ENCODE measurements at regions of chr1 and their contacts with region 1.

Region 1: GRCh38 chr1:145845514-145846161 is at the start of gene NUDT17:
- DNase-seq: peak; percentile 55 to 88 (median 82)
- ATAC-seq: peak; percentile 79
- H3K4me3 ChIP-seq: peak within 1 kb of the TSS; percentile 58 to 74
- H3K4me3 Mint-ChIP-seq: no peak within 1 kb of the TSS
- H3K27ac ChIP-seq: peak within 1 kb of the TSS; percentile 14 to 21
- H3K27ac Mint-ChIP-seq: peak within 1 kb of the TSS; percentile 47
- H3K4me1 ChIP-seq: peaks cover 12% of the 10 kb centered on the region
- H3K4me1 Mint-ChIP-seq: peaks cover 8% of the 10 kb centered on the region
- H3K27me3 ChIP-seq: no peaks in the 10 kb centered on the region
- H3K27me3 Mint-ChIP-seq: no peaks in the 10 kb centered on the region
- CTCF ChIP-seq: peak; percentile 91
- total RNA-seq, gene NUDT17: 1.4 TPM

Region 2: GRCh38 chr1:145804235-145805045 is 41.2 kb before region 1 on chr1:
- CTCF ChIA-PET with region 1: no interaction called
- POLR2A ChIA-PET with region 1: no interaction called
- intact Hi-C with region 1: no loop called
- DNase-seq: no peak
- ATAC-seq: no peak
- H3K4me3 ChIP-seq: no peak overlapping the region
- H3K4me3 Mint-ChIP-seq: no peak overlapping the region
- H3K27ac ChIP-seq: no peak overlapping the region
- H3K27ac Mint-ChIP-seq: no peak overlapping the region
- H3K4me1 ChIP-seq: no peaks in the 10 kb centered on the region
- H3K4me1 Mint-ChIP-seq: peaks cover 52% of the 10 kb centered on the region
- H3K27me3 ChIP-seq: no peaks in the 10 kb centered on the region
- H3K27me3 Mint-ChIP-seq: no peaks in the 10 kb centered on the region
- CTCF ChIP-seq: no peak

Region 3: DNA sequence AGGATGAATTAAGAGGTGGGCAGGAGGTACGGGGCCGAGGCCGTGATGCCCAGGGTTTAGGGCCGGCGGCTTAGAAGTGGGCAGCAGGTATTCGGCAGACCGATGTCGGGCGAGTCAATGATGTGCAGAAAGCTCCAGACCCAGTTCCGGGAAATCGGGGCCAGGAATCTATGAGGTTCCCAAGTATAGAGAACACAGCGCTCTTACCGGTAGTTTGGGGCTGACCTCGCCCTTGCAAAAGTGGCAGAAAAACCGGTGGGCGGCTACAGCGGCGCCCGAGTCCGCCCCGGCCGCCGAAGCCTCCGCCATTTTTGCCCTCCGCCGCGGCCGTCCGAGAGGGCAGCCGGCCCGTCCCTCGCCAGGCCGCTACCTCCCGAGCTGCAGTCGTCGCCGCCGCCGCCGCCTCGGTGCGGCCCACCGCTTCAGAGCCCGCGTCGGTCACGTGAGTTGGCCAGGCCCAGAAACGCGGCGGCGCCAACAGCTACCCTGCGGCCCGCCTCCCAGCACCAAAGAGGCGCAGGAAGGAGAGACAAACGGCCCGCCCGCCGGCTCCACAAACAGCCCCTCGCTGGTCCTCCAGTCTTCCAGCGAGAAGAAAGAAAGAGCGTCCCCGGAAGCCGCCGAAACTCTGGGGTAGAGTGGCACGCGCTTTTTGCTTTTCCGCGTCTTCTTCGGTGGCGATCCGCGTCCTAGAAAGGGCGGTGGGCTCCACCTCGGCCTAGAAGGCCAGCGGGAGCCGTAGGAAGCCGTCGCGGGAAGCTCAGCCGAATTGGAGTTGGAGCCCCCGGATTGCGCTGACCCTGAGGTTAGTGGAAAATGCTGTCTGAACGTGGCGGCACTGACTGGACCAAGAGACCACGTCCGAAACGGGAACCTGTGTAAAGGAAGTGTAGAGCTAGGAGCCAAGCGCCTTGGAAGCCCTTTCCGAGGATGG is 21.8 kb before region 1 on chr1 and contains the starts of genes POLR3C and RNF115:
- CTCF ChIA-PET with region 1: interaction called, 20 read pairs
- POLR2A ChIA-PET with region 1: interaction called, 25 read pairs
- intact Hi-C with region 1: loop called (anchors 2 kb)
- DNase-seq: peak; percentile 68 to 94 (median 88)
- ATAC-seq: peak; percentile 93
- H3K4me3 ChIP-seq: peak within 1 kb of the TSS; percentile 93 to 99
- H3K4me3 Mint-ChIP-seq: peak within 1 kb of the TSS; percentile 95
- H3K27ac ChIP-seq: peak within 1 kb of the TSS; percentile 77 to 89
- H3K27ac Mint-ChIP-seq: peak within 1 kb of the TSS; percentile 96
- H3K4me1 ChIP-seq: peaks cover 14% of the 10 kb centered on the region
- H3K4me1 Mint-ChIP-seq: peaks cover 35% of the 10 kb centered on the region
- H3K27me3 ChIP-seq: no peaks in the 10 kb centered on the region
- H3K27me3 Mint-ChIP-seq: no peaks in the 10 kb centered on the region
- CTCF ChIP-seq: no peak
- total RNA-seq, gene POLR3C: 22.1 to 25.8 TPM
- total RNA-seq, gene RNF115: 16.4 TPM

Region 4: DNA sequence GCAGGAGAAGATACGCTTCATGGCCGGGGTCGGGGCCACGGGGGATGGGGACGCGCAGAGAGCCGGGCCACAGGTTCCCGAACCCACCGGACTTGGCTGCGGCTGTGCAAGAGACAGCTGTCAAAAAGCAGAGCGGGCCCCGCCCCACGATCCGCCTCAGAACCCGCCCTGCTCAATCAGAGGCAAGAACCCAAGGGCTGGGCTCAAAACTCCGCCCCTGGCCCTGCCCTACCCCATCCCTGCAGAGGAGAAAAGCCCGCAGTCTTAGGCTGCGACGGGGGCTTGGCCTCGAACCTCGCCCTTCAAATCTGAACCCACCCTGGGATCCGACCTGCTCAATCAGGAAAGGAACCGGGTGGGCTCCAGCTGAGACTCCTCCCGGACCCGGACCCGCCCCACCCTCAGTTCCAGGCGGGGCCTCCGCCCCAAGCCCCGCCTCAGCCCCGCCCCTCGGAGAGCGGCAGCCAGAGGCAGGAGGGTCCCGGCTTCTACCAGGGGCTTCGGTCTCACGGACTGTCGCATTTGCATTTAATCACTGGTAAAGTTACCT is 40.2 kb after region 1 on chr1 and contains the start of gene ANKRD35:
- CTCF ChIA-PET with region 1: interaction called, 75 read pairs
- POLR2A ChIA-PET with region 1: interaction called, 3 read pairs
- intact Hi-C with region 1: loop called (anchors 2 to 5 kb)
- DNase-seq: peak; percentile 74 to 92 (median 88)
- ATAC-seq: peak; percentile 98
- H3K4me3 ChIP-seq: peak within 1 kb of the TSS; percentile 68 to 84
- H3K4me3 Mint-ChIP-seq: peak within 1 kb of the TSS; percentile 81
- H3K27ac ChIP-seq: no peak within 1 kb of the TSS
- H3K27ac Mint-ChIP-seq: no peak within 1 kb of the TSS
- H3K4me1 ChIP-seq: peaks cover 8% of the 10 kb centered on the region
- H3K4me1 Mint-ChIP-seq: peaks cover 17% of the 10 kb centered on the region
- H3K27me3 ChIP-seq: peaks cover 0 to 8% of the 10 kb centered on the region in 2 experiments
- H3K27me3 Mint-ChIP-seq: peaks cover 17% of the 10 kb centered on the region
- CTCF ChIP-seq: no peak
- total RNA-seq, gene ANKRD35: not detected

Region 5: DNA sequence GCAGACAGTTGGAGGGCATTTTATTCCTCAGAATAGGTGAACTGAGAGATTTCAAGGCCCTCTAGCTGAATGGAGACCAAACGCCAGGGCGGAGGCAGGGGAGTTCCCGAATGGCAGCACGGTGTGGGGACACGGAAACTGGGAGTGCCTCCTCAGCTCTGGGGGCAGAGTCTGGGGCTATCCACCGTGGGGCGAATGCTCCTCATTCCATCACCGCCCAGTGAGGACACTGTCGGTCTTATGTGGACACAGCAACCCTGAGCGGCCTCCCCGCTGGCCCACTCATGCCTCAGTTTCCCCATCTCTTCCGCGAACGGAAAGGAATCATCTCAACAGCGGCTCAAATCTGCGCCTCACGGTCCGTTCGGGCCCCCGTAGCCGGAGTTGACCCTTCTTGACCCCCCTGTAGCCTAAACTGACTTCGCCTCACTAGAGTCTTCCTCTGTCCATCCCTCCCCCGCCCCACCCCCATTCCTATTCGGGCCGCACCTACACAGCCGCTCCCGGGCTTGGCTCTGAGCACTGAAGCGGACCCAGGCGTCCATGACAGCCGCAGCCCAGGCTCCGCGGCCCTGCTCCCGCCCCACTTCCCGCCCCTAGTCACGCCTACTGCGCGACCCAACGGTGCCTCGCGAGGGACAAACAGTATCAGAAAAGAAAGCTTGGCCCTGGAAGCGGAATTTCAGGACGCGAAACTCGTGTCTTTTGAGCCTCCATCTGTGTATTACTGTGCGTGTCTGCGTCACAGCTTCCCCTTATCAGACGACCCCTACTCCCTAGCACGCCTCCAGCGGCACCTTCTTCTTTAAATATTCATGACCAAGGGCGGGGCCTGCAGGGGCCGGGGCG is 72.7 kb after region 1 on chr1 and contains the start of gene PEX11B:
- CTCF ChIA-PET with region 1: interaction called, 16 read pairs
- POLR2A ChIA-PET with region 1: interaction called, 11 read pairs
- intact Hi-C with region 1: no loop called
- DNase-seq: peak; percentile 87 to 96 (median 93)
- ATAC-seq: peak; percentile 91
- H3K4me3 ChIP-seq: peak within 1 kb of the TSS; percentile 88 to 96
- H3K4me3 Mint-ChIP-seq: peak within 1 kb of the TSS; percentile 90
- H3K27ac ChIP-seq: peak within 1 kb of the TSS; percentile 74 to 86
- H3K27ac Mint-ChIP-seq: peak within 1 kb of the TSS; percentile 96
- H3K4me1 ChIP-seq: peaks cover 24% of the 10 kb centered on the region
- H3K4me1 Mint-ChIP-seq: peaks cover 43% of the 10 kb centered on the region
- H3K27me3 ChIP-seq: no peaks in the 10 kb centered on the region
- H3K27me3 Mint-ChIP-seq: no peaks in the 10 kb centered on the region
- CTCF ChIP-seq: no peak
- total RNA-seq, gene PEX11B: 11.8 TPM

Region 6: GRCh38 chr1:145978854-145979759 is 133.5 kb after region 1 on chr1:
- CTCF ChIA-PET with region 1: interaction called, 57 read pairs
- POLR2A ChIA-PET with region 1: interaction called, 3 read pairs
- intact Hi-C with region 1: loop called (anchors 1 kb)
- DNase-seq: peak; percentile 45 to 96 (median 76)
- ATAC-seq: peak; percentile 72
- H3K4me3 ChIP-seq: peak overlapping the region; percentile 17 to 34
- H3K4me3 Mint-ChIP-seq: no peak overlapping the region
- H3K27ac ChIP-seq: peak overlapping the region; percentile 57 to 95
- H3K27ac Mint-ChIP-seq: no peak overlapping the region
- H3K4me1 ChIP-seq: peaks cover 70% of the 10 kb centered on the region
- H3K4me1 Mint-ChIP-seq: peaks cover 23% of the 10 kb centered on the region
- H3K27me3 ChIP-seq: no peaks in the 10 kb centered on the region
- H3K27me3 Mint-ChIP-seq: no peaks in the 10 kb centered on the region
- CTCF ChIP-seq: peak; percentile 27

Region 7: GRCh38 chr1:146019231-146020057 is 173.8 kb after region 1 on chr1:
- CTCF ChIA-PET with region 1: interaction called, 118 read pairs
- POLR2A ChIA-PET with region 1: no interaction called
- intact Hi-C with region 1: no loop called
- DNase-seq: peak in 1 of 9 experiments; percentile 45
- ATAC-seq: peak; percentile 20
- H3K4me3 ChIP-seq: no peak overlapping the region
- H3K4me3 Mint-ChIP-seq: peak overlapping the region; percentile 37
- H3K27ac ChIP-seq: no peak overlapping the region
- H3K27ac Mint-ChIP-seq: no peak overlapping the region
- H3K4me1 ChIP-seq: no peaks in the 10 kb centered on the region
- H3K4me1 Mint-ChIP-seq: peaks cover 9% of the 10 kb centered on the region
- H3K27me3 ChIP-seq: peaks cover 10 to 14% of the 10 kb centered on the region in 2 experiments
- H3K27me3 Mint-ChIP-seq: peaks cover 38% of the 10 kb centered on the region
- CTCF ChIP-seq: no peak

Region 8: GRCh38 chr1:147549526-147549925 is 1703.9 kb after region 1 on chr1:
- CTCF ChIA-PET with region 1: no interaction called
- POLR2A ChIA-PET with region 1: no interaction called
- intact Hi-C with region 1: no loop called
- DNase-seq: peak in 3 of 9 experiments; percentile 8 to 38 (median 24)
- ATAC-seq: no peak
- H3K4me3 ChIP-seq: no peak overlapping the region
- H3K4me3 Mint-ChIP-seq: no peak overlapping the region
- H3K27ac ChIP-seq: no peak overlapping the region
- H3K27ac Mint-ChIP-seq: peak overlapping the region; percentile 16
- H3K4me1 ChIP-seq: peaks cover 24% of the 10 kb centered on the region
- H3K4me1 Mint-ChIP-seq: peaks cover 41% of the 10 kb centered on the region
- H3K27me3 ChIP-seq: no peaks in the 10 kb centered on the region
- H3K27me3 Mint-ChIP-seq: peaks cover 14% of the 10 kb centered on the region
- CTCF ChIP-seq: no peak